CD4-positive, alpha-beta memory T cell (primary cell): ENCODE measurements at regions of chr1 and their contacts with region 1.

Region 1: DNA sequence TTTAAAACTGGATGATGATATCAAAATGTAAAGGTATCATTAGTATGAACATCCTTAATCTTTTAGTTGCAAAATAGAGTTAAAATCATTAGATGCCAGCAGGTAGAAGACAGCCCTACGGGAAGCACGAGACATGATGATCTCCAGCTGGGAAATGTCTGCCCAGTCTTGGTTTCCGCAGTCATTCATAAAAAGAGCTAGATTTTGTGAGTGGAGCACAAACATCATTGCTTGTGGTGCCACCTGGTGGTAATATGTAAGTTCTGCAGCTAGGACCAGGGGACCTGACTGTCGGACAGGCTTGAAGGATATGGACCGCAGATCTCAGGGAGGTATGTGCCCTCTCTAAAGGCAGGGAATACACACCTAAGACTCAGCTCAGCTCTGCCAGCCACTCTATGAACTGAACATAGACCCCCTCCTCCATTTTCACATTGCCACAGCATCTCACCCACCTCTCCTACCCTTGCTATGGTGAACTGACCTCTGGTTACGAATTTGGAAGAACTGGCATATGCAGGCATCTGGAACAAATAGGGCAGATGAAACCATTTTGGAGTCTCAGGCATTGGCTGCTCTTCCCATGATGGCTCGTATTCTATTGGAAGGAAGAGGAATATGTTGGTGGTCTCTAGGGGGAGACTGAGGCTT is 9.2 kb downstream of the FCMR start:
- DNase-seq: peak; percentile 67 to 71 (median 68)
- H3K4me3 ChIP-seq: no peak overlapping the region
- H3K4me3 Mint-ChIP-seq: peak overlapping the region; percentile 21 to 68 (median 54)
- H3K27ac ChIP-seq: peak overlapping the region; percentile 29
- H3K27ac Mint-ChIP-seq: peak overlapping the region; percentile 71 to 93 (median 92)
- H3K4me1 ChIP-seq: peaks cover 98% of the 10 kb centered on the region
- H3K4me1 Mint-ChIP-seq: peaks cover 76 to 96% (median 87%) of the 10 kb centered on the region in 4 donors
- H3K27me3 ChIP-seq: no peaks in the 10 kb centered on the region
- H3K27me3 Mint-ChIP-seq: no peaks in the 10 kb centered on the region

Region 2: GRCh38 chr1:206591226-206591625 is 321.3 kb before region 1 on chr1:
- CTCF ChIA-PET with region 1: no interaction called
- POLR2A ChIA-PET with region 1: no interaction called
- intact Hi-C with region 1: no loop called
- DNase-seq: no peak
- H3K4me3 ChIP-seq: no peak overlapping the region
- H3K4me3 Mint-ChIP-seq: no peak overlapping the region
- H3K27ac ChIP-seq: peak overlapping the region; percentile 44
- H3K27ac Mint-ChIP-seq: peak overlapping the region; percentile 77 to 94 (median 87)
- H3K4me1 ChIP-seq: peaks cover 35% of the 10 kb centered on the region
- H3K4me1 Mint-ChIP-seq: peaks cover 28 to 55% (median 33%) of the 10 kb centered on the region in 4 donors
- H3K27me3 ChIP-seq: no peaks in the 10 kb centered on the region
- H3K27me3 Mint-ChIP-seq: no peaks in the 10 kb centered on the region

Region 3: DNA sequence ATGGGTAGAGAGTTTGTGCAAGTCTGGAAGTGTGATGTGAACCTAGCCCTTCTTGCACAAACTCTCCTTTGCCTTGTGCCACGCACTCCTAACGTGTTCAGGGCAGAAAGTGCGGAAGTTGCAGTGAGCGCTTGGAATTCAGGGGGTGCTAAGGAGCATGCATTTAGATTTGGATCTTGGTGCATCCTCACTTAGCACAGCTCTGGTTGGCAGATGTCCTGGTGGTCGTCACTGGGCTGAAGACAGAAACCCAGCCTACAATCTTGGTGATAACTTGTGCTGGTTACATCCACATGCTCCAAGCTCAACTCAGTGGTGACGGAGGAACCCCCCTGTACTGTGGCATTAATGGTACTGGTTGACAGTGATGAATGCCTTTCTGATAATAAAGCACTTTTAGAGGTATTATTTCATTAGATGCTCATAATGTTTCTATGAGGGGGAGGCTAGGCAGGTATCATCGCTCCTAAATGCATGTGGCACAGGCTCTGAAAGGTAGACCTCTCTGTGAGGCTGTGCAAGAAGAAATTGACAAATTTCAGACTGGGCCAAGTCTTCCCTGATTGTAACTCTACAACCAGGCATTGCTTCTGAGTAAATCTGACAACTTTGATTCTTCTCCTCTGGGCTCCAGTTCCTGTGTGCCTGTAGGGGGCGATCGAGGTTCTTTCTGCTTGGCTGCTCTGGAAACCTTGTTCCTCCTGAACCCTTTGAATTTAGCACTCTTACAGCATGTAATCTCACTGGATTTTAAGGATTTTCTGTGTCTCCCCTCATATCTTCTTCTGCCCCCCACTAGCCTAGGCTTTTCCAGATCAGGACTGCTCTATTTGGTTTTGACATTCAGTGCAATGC is 187.2 kb before region 1 on chr1:
- CTCF ChIA-PET with region 1: interaction called, 44 read pairs
- POLR2A ChIA-PET with region 1: interaction called, 12 read pairs
- intact Hi-C with region 1: loop called (anchors 1 kb)
- DNase-seq: peak in 4 of 5 donors; percentile 47 to 60 (median 56)
- H3K4me3 ChIP-seq: no peak overlapping the region
- H3K4me3 Mint-ChIP-seq: peak overlapping the region in 2 of 8 donors; percentile 43 to 57
- H3K27ac ChIP-seq: no peak overlapping the region
- H3K27ac Mint-ChIP-seq: peak overlapping the region in 6 of 7 donors; percentile 60 to 90 (median 76)
- H3K4me1 ChIP-seq: peaks cover 32% of the 10 kb centered on the region
- H3K4me1 Mint-ChIP-seq: peaks cover 33 to 61% (median 46%) of the 10 kb centered on the region in 4 donors
- H3K27me3 ChIP-seq: no peaks in the 10 kb centered on the region
- H3K27me3 Mint-ChIP-seq: no peaks in the 10 kb centered on the region

Region 4: GRCh38 chr1:206808615-206809014 is 104.0 kb before region 1 on chr1:
- CTCF ChIA-PET with region 1: interaction called, 85 read pairs
- POLR2A ChIA-PET with region 1: interaction called, 14 read pairs
- intact Hi-C with region 1: loop called (anchors 1 kb)
- DNase-seq: peak; percentile 61 to 68 (median 63)
- H3K4me3 ChIP-seq: no peak overlapping the region
- H3K4me3 Mint-ChIP-seq: no peak overlapping the region
- H3K27ac ChIP-seq: no peak overlapping the region
- H3K27ac Mint-ChIP-seq: peak overlapping the region in 6 of 7 donors; percentile 20 to 90 (median 83)
- H3K4me1 ChIP-seq: peaks cover 35% of the 10 kb centered on the region
- H3K4me1 Mint-ChIP-seq: peaks cover 24 to 56% (median 43%) of the 10 kb centered on the region in 4 donors
- H3K27me3 ChIP-seq: no peaks in the 10 kb centered on the region
- H3K27me3 Mint-ChIP-seq: no peaks in the 10 kb centered on the region

Region 5: DNA sequence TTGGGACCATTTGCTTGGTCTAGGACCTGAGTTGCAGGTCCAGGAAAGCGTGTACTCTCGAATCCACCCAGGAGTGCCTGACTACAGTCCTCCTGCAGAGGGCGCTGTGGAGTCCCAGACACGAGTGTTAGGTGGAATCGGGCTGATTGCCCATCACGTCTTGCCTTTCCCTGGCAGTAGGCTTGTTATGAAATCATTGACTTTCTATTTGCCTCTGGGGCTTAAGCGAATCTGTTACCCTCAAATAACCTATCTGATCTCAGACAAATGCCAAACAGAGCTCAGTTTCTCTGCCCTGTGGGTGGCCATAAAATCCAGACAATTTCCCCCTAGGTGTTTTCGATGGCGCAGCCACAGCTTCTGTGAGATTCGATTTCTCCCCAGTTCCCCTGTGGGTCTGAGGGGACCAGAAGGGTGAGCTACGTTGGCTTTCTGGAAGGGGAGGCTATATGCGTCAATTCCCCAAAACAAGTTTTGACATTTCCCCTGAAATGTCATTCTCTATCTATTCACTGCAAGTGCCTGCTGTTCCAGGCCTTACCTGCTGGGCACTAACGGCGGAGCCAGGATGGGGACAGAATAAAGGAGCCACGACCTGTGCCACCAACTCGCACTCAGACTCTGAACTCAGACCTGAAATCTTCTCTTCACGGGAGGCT is 47.4 kb before region 1 on chr1 and contains the start of gene IL20:
- CTCF ChIA-PET with region 1: interaction called, 73 read pairs
- POLR2A ChIA-PET with region 1: interaction called, 4 read pairs
- intact Hi-C with region 1: loop called (anchors 1 kb)
- DNase-seq: peak; percentile 73 to 79 (median 77)
- H3K4me3 ChIP-seq: no peak within 1 kb of the TSS
- H3K4me3 Mint-ChIP-seq: peak within 1 kb of the TSS in 1 of 8 donors; percentile 6
- H3K27ac ChIP-seq: no peak within 1 kb of the TSS
- H3K27ac Mint-ChIP-seq: peak within 1 kb of the TSS in 2 of 7 donors; percentile 15 to 55
- H3K4me1 ChIP-seq: no peaks in the 10 kb centered on the region
- H3K4me1 Mint-ChIP-seq: peaks cover 0 to 5% (median 4%) of the 10 kb centered on the region in 4 donors
- H3K27me3 ChIP-seq: no peaks in the 10 kb centered on the region
- H3K27me3 Mint-ChIP-seq: peaks cover 16% of the 10 kb centered on the region in 2 donors
- total RNA-seq, gene IL20: not detected

Region 6: DNA sequence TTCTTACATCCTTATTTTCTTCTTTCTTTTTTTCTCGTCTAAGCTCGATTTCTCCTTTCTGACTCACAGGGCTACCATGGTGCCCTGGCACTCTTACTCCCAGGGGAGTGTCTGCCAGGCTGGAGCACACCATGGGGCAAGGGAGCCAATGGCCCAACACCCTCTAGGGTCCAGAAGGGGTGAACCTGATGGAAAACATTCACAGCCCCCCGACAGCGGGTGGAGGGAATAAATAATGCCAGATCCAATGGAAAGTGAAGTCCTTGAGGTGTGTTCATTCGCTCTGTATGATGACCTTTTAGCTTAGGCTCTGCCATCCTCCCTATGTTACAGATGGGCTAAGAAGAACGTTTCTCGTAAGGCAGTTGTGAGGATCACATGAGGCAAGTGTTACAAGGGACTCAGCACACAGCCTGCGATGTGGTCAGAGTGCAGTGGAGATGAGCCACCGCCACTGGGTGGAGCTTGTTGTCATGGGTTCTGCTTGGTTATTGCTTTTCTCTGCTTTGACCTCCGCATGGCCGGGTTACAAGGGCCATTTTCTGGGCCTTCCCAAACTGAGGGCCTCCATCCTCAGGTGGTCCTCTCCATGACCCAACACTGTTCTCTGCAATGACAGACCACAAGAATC is 12.7 kb after region 1 on chr1:
- CTCF ChIA-PET with region 1: interaction called, 477 read pairs
- POLR2A ChIA-PET with region 1: interaction called, 211 read pairs
- intact Hi-C with region 1: loop called (anchors 1 kb)
- DNase-seq: peak; percentile 42 to 61 (median 55)
- H3K4me3 ChIP-seq: no peak overlapping the region
- H3K4me3 Mint-ChIP-seq: no peak overlapping the region
- H3K27ac ChIP-seq: no peak overlapping the region
- H3K27ac Mint-ChIP-seq: no peak overlapping the region
- H3K4me1 ChIP-seq: peaks cover 56% of the 10 kb centered on the region
- H3K4me1 Mint-ChIP-seq: peaks cover 13 to 27% (median 25%) of the 10 kb centered on the region in 4 donors
- H3K27me3 ChIP-seq: no peaks in the 10 kb centered on the region
- H3K27me3 Mint-ChIP-seq: no peaks in the 10 kb centered on the region

Region 7: GRCh38 chr1:207077470-207078377 is 165.2 kb after region 1 on chr1:
- CTCF ChIA-PET with region 1: no interaction called
- POLR2A ChIA-PET with region 1: no interaction called
- intact Hi-C with region 1: loop called (anchors 10 kb)
- DNase-seq: peak; percentile 69 to 75 (median 72)
- H3K4me3 ChIP-seq: no peak overlapping the region
- H3K4me3 Mint-ChIP-seq: no peak overlapping the region
- H3K27ac ChIP-seq: no peak overlapping the region
- H3K27ac Mint-ChIP-seq: no peak overlapping the region
- H3K4me1 ChIP-seq: no peaks in the 10 kb centered on the region
- H3K4me1 Mint-ChIP-seq: peaks cover 0 to 2% (median under 1%) of the 10 kb centered on the region in 4 donors
- H3K27me3 ChIP-seq: no peaks in the 10 kb centered on the region
- H3K27me3 Mint-ChIP-seq: peaks cover 7 to 11% of the 10 kb centered on the region in 2 donors